ENCODE measurements at regions of chr21 and their contacts with region 1.

Region 1: GRCh38 chr21:45098867-45099266 is 24.5 kb downstream of the ADARB1 start:
- DNase-seq: peak; percentile 46
- H3K4me3 ChIP-seq: no peak overlapping the region
- H3K27ac ChIP-seq: no peak overlapping the region
- H3K4me1 ChIP-seq: peaks cover 65% of the 10 kb centered on the region
- H3K27me3 ChIP-seq: no peaks in the 10 kb centered on the region
- CTCF ChIP-seq: peak; percentile 36 to 53
- POLR2A ChIP-seq: no peak

Region 2: DNA sequence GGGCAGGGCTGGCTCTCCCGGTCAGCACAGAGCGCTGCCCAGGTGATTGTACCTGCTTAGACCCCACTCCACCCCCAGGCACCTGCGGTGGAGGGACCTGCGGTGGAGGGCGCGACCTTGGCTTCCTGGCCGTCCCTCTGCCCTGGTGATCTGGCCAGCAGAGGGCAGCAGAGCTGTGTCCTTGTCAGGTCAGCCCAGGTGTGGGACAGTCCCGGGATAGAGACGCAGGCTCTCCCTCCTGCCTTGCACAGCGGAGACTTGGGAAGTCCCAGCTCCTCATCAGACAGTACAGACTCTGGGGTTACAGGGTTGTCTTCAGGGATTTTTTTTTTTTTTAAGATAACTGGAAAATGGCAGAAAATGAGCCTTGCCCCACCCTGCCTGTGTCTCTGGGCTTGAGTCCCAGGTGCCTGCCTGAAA is 149.1 kb before region 1 on chr21:
- CTCF ChIA-PET with region 1: interaction called, 14 read pairs
- POLR2A ChIA-PET with region 1: no interaction called
- dilution Hi-C with region 1: no loop called
- intact Hi-C with region 1: no loop called
- DNase-seq: peak; percentile 54
- H3K4me3 ChIP-seq: no peak overlapping the region
- H3K27ac ChIP-seq: no peak overlapping the region
- H3K4me1 ChIP-seq: peaks cover 3% of the 10 kb centered on the region
- H3K27me3 ChIP-seq: no peaks in the 10 kb centered on the region
- CTCF ChIP-seq: peak; percentile 88 to 89
- POLR2A ChIP-seq: no peak

Region 3: GRCh38 chr21:45074048-45074817 is 24.6 kb before region 1 on chr21 and contains the start of gene ADARB1:
- CTCF ChIA-PET with region 1: interaction called, 15 read pairs
- POLR2A ChIA-PET with region 1: no interaction called
- dilution Hi-C with region 1: no loop called
- intact Hi-C with region 1: loop called (anchors 2 kb)
- DNase-seq: peak; percentile 29
- H3K4me3 ChIP-seq: peak within 1 kb of the TSS; percentile 68 to 81 (median 73)
- H3K27ac ChIP-seq: peak within 1 kb of the TSS; percentile 75
- H3K4me1 ChIP-seq: peaks cover 16% of the 10 kb centered on the region
- H3K27me3 ChIP-seq: no peaks in the 10 kb centered on the region
- CTCF ChIP-seq: no peak
- POLR2A ChIP-seq: peak; percentile 79
- total RNA-seq, gene ADARB1: 54.3 and 55.5 TPM in 2 replicates

Region 4: DNA sequence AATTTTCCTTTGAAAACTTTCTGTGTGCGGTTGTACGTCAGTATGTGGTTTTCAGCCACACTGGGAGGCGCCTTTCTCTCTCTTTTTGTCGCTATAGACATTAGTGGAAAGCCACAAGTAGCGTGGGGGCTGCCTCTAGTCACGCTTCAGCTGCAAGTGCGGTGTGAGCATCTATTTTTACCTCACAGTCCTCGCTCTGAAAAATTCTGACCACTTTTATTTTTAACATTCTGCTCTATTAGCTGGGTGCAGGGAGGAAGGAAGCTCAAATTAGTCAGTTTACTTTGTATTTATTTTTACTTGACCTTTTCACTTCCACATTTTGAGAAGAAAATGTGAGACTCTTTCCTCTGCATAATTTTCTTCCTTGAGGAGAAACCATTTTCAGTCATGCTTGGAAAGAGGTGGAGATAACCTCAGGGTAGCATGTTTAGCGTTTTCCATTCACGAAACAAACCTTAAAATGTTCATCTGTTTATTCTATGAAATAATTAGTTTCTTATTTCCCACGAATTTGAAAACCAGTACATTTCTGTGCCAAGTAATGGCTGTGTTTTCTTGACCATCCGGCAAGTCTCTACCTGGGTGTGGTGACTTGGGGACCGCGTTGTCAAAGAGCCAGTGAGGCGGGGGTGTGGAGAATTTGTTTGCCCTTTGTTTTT is 11.1 kb after region 1 on chr21:
- CTCF ChIA-PET with region 1: interaction called, 14 read pairs
- POLR2A ChIA-PET with region 1: no interaction called
- dilution Hi-C with region 1: no loop called
- intact Hi-C with region 1: loop called (anchors 1 kb)
- DNase-seq: peak; percentile 56
- H3K4me3 ChIP-seq: peak overlapping the region in 2 of 3 experiments; percentile 4 to 43
- H3K27ac ChIP-seq: peak overlapping the region; percentile 85
- H3K4me1 ChIP-seq: peaks cover 31% of the 10 kb centered on the region
- H3K27me3 ChIP-seq: no peaks in the 10 kb centered on the region
- CTCF ChIP-seq: no peak
- POLR2A ChIP-seq: no peak

Region 5: DNA sequence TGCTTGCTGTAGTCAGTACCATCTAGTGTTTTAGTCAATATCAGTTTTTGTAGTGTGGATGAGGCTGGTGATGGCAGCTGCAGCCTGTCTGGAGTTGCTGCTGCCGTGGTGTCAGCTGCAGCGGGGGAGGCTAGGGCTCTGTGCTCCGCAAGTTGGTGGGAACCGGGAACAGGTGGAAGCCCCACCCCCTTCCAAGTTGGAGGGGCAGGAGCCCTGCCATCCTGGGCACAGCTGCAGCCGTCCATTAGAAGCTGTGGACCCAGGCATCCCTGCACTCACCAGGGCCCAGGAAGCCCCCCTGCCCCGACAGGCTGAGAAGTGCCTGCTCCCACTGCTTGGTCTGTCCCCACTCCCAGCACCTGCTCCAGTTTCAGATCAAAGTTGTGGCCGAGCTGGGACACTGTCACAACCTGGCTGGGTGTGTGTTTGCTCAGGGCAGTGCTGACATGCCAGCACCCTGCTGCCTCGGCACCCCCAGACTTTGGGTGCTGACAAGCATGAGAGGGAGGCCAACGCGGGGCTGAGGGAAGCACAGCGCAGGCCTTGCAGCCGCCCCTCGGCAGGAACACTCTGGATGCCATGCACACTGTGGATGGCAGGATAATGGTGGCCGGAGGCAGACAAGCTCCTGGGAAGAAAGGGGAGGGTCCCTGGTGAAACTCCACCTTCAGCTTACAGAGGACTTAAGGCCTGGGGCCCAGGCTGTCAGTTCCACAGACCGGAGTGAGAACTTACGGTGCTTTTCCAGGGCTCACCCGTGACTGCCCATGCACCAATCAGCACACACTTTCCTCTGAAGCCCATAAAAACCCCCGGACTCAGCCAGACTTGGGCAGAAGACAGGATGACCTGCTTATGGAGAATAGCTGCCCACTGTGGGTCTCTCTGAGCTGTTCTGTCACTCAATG is 62.4 kb after region 1 on chr21:
- CTCF ChIA-PET with region 1: no interaction called
- POLR2A ChIA-PET with region 1: no interaction called
- dilution Hi-C with region 1: no loop called
- intact Hi-C with region 1: no loop called
- DNase-seq: no peak
- H3K4me3 ChIP-seq: no peak overlapping the region
- H3K27ac ChIP-seq: no peak overlapping the region
- H3K4me1 ChIP-seq: no peaks in the 10 kb centered on the region
- H3K27me3 ChIP-seq: no peaks in the 10 kb centered on the region
- CTCF ChIP-seq: no peak
- POLR2A ChIP-seq: no peak

Region 6: GRCh38 chr21:45336870-45337269 is 238.0 kb after region 1 on chr21:
- CTCF ChIA-PET with region 1: no interaction called
- POLR2A ChIA-PET with region 1: no interaction called
- dilution Hi-C with region 1: no loop called
- intact Hi-C with region 1: no loop called
- DNase-seq: no peak
- H3K4me3 ChIP-seq: no peak overlapping the region
- H3K27ac ChIP-seq: no peak overlapping the region
- H3K4me1 ChIP-seq: peaks cover 11% of the 10 kb centered on the region
- H3K27me3 ChIP-seq: no peaks in the 10 kb centered on the region
- CTCF ChIP-seq: no peak
- POLR2A ChIP-seq: no peak

Measured in endothelial cell of umbilical vein (primary cell).